PC-3 (cell line): ENCODE measurements at regions of chr2 and their contacts with region 1.

Region 1: GRCh38 chr2:45732436-45732835 is 81.0 kb downstream of the PRKCE start:
- DNase-seq: no peak
- ATAC-seq: no peak
- H3K4me3 ChIP-seq: no peak overlapping the region
- H3K27ac ChIP-seq: no peak overlapping the region
- H3K4me1 ChIP-seq: no peaks in the 10 kb centered on the region
- H3K27me3 ChIP-seq: no peaks in the 10 kb centered on the region
- CTCF ChIP-seq: no peak

Region 2: DNA sequence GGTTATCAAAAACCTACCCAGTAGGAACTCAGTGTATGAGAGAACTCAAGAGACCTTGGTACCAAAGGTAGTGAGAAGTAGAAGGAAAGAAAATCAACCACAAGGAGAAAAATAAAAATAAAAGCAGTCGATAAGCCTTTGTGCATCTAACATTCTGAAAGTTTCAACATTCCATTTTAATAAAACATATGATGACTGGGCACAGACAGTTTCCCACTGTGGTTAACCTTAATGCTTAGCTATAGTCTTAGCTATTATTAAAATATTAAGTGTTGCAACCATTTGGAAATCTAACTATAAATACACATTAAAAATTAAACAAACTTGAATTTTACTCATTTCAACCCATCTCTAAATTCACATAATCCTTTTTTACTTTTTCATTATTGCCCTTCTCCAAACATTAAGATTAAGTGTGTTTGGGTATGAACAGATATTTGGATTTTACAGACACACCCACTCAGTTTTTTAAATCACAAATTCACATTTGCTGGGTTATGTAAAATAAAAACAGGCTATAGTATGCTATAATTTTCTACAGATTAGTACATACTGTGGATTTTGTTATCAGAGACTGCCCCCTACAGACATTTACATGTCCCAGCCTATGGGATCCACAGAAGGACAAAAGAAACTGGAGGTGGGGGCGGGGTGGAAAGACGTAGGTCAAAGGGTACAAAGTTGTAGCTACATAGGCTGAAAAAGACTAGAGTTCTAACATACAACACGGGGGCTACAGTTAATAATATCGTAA is 154.2 kb before region 1 on chr2:
- CTCF ChIA-PET with region 1: no interaction called
- POLR2A ChIA-PET with region 1: no interaction called
- intact Hi-C with region 1: no loop called
- DNase-seq: peak; percentile 43
- ATAC-seq: peak; percentile 73
- H3K4me3 ChIP-seq: no peak overlapping the region
- H3K27ac ChIP-seq: no peak overlapping the region
- H3K4me1 ChIP-seq: no peaks in the 10 kb centered on the region
- H3K27me3 ChIP-seq: no peaks in the 10 kb centered on the region
- CTCF ChIP-seq: peak; percentile 65

Region 3: DNA sequence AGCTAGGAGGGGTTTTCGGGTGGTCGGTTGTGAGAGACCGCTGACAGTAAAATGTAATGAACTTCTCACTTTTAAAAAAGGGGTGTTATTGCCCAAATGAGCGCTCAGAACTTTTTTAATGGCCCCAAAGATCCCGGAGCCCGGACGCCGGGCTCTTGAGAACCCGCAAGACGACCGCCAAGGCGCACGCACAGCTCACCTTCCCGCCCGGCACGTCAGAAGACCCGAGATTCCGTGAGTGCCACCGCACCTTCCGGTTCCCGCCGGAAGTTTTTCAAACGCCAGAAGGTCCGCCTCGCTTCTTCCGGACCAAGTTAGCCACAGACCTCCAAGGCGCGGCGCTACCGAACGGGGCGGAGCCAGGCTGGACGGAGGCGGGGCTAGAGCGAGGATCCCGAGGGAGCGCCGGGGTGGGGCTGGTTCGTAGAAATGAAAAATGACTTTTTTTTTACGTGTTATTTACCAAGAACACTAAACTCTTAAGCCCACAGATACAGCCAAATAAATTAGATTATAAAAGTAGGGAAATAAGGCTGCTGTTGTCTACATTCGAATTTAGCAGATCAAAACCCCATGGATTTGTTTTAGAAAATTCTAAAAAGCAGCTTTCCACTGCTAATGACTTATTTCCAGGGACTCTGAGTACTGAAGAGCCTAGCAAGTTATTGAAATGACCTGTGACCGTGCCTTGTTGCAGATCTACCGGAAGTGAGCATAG is 121.3 kb before region 1 on chr2 and contains the start of gene SRBD1:
- CTCF ChIA-PET with region 1: no interaction called
- POLR2A ChIA-PET with region 1: no interaction called
- intact Hi-C with region 1: no loop called
- DNase-seq: peak; percentile 98
- ATAC-seq: peak; percentile 97
- H3K4me3 ChIP-seq: peak within 1 kb of the TSS; percentile 85
- H3K27ac ChIP-seq: peak within 1 kb of the TSS; percentile 87
- H3K4me1 ChIP-seq: peaks cover 23% of the 10 kb centered on the region
- H3K27me3 ChIP-seq: no peaks in the 10 kb centered on the region
- CTCF ChIP-seq: no peak
- total RNA-seq, gene SRBD1: 19.8 and 20.8 TPM in 2 replicates

Region 4: GRCh38 chr2:45867800-45868199 is 135.4 kb after region 1 on chr2:
- CTCF ChIA-PET with region 1: no interaction called
- POLR2A ChIA-PET with region 1: interaction called, 18 read pairs
- intact Hi-C with region 1: no loop called
- DNase-seq: no peak
- ATAC-seq: no peak
- H3K4me3 ChIP-seq: no peak overlapping the region
- H3K27ac ChIP-seq: no peak overlapping the region
- H3K4me1 ChIP-seq: no peaks in the 10 kb centered on the region
- H3K27me3 ChIP-seq: no peaks in the 10 kb centered on the region
- CTCF ChIP-seq: no peak